ENCODE measurements at regions of chr1 and their contacts with region 1.

Region 1: GRCh38 chr1:115166531-115167091 is 77.3 kb upstream of the TSPAN2 start:
- DNase-seq: peak; percentile 95
- H3K4me3 ChIP-seq: no peak overlapping the region
- H3K27ac ChIP-seq: peak overlapping the region; percentile 61
- H3K4me1 ChIP-seq: peaks cover 21% of the 10 kb centered on the region
- H3K27me3 ChIP-seq: no peaks in the 10 kb centered on the region
- CTCF ChIP-seq: no peak

Region 2: DNA sequence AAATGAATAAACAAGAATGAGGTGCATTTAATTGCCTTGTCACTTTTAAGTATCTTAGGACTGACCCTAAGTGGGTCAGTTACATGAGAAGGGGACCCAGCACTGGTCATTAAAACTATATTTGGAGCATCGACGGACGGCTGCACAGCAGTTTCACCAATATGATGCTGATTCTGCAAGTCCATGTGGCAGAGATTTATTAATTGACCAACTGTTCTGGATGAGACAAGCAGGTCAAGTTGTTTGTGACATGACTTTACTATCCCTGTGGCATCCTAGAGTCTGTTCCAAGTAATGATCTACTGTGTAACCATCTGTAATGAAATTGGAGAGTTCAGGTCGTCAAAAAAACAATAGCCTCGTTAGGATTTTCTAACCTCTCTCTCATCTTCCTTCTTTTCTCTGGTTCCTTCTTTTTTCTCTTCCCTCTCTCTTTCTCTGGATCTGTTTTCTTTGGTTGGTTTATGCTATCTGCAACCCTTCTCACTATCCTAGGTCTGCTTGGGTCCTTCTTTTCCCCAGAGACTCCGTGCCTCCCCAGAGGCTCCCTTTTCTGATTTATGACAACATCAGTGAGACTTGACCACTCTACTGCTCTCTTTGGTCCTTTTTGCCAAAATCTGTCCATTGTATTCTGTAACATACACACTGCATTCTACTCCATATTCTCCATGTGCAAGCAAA is 480.6 kb before region 1 on chr1:
- CTCF ChIA-PET with region 1: no interaction called
- POLR2A ChIA-PET with region 1: no interaction called
- intact Hi-C with region 1: no loop called
- DNase-seq: no peak
- H3K4me3 ChIP-seq: no peak overlapping the region
- H3K27ac ChIP-seq: no peak overlapping the region
- H3K4me1 ChIP-seq: no peaks in the 10 kb centered on the region
- H3K27me3 ChIP-seq: no peaks in the 10 kb centered on the region
- CTCF ChIP-seq: no peak

Region 3: DNA sequence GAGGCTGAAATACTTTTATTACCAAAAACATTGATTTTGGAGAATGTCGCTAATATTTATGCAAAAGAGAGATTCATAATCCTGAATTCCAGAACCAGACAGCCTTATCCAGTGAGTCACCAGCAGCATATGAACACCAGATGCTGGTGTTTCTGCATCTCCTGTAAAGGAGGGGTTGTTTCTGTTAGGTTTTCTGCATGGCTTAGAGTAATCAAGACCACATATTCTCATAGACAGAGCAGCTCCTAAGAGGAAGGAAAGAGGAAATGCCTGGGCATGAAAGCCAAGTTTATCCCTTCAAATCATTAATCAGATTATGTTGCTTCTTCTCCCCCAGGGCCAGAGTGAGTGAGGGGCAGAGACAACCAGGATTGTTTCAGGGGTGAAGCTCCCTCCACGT is 85.2 kb after region 1 on chr1:
- CTCF ChIA-PET with region 1: interaction called, 3 read pairs
- POLR2A ChIA-PET with region 1: no interaction called
- intact Hi-C with region 1: loop called (anchors 1 kb)
- DNase-seq: peak; percentile 95
- H3K4me3 ChIP-seq: no peak overlapping the region
- H3K27ac ChIP-seq: peak overlapping the region; percentile 82
- H3K4me1 ChIP-seq: peaks cover 28% of the 10 kb centered on the region
- H3K27me3 ChIP-seq: no peaks in the 10 kb centered on the region
- CTCF ChIP-seq: no peak

Region 4: GRCh38 chr1:115337633-115338456 is 171.2 kb after region 1 on chr1 and contains the start of gene NGF:
- CTCF ChIA-PET with region 1: no interaction called
- POLR2A ChIA-PET with region 1: no interaction called
- intact Hi-C with region 1: loop called (anchors 10 kb)
- DNase-seq: peak; percentile 74
- H3K4me3 ChIP-seq: peak within 1 kb of the TSS; percentile 42
- H3K27ac ChIP-seq: no peak within 1 kb of the TSS
- H3K4me1 ChIP-seq: peaks cover 5% of the 10 kb centered on the region
- H3K27me3 ChIP-seq: peaks cover 16% of the 10 kb centered on the region
- CTCF ChIP-seq: 0 out of 2 replicates have a peak, but pooled peaks have one; percentile 10
- total RNA-seq, gene NGF: 0.39 and 0.47 TPM in 2 replicates